H1 (cell line): ENCODE measurements at regions of chr7 and their contacts with region 1.

Region 1: DNA sequence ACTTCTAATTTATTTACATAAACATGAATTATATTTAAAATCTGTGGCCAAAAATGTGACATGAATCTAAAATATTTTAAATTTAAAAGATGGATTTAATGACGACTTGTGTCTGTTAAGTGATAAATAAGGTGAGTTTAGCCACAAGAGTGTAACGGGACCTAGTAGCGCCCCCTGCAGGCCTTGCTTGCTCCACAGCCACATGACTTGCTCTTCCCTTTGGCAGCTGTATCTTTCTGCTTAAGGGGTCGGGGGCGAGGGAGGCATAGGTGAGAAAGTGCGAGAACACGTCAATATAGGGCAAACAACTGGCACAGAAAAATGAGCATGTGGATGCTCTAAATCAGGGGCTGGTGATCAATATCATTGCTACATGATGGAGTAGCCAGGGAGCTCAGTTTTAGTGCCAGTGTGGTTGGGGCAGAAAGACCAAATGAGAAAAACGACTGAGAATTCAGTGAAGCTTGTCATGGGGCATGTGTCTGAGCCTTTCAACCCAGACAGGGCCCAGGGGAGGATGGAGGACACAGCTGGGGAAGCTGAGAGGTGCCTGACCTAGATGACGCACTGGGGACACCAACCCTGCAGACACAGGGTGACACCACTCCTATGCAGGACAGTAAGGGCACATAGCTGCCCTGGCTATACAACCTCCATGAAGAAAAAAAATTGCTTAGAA is 49.8 kb downstream of the PAXIP1 start:
- DNase-seq: peak; percentile 71 to 90
- H3K4me3 ChIP-seq: no peak overlapping the region
- H3K27ac ChIP-seq: no peak overlapping the region; the same call in 1 of the 2 replicates
- H3K4me1 ChIP-seq: no peaks in the 10 kb centered on the region
- H3K27me3 ChIP-seq: no peaks in the 10 kb centered on the region
- CTCF ChIP-seq: peak; percentile 81 to 89 (median 83)
- EP300 ChIP-seq: no peak
- POLR2A ChIP-seq: no peak
- RAD21 ChIP-seq: peak; percentile 55 to 65

Region 2: GRCh38 chr7:154794110-154794780 is 158.9 kb before region 1 on chr7:
- CTCF ChIA-PET with region 1: no interaction called
- POLR2A ChIA-PET with region 1: no interaction called
- DNase-seq: peak in 1 of 2 experiments; percentile 90
- H3K4me3 ChIP-seq: peak overlapping the region; percentile 11 to 57 (median 32); a peak in 7 of 8 replicates
- H3K27ac ChIP-seq: no peak overlapping the region
- H3K4me1 ChIP-seq: peaks cover 0 to 2% (median 0%) of the 10 kb centered on the region in 4 experiments; a peak in 3 of 7 replicates
- H3K27me3 ChIP-seq: no peaks in the 10 kb centered on the region; a peak in 1 of 7 replicates
- CTCF ChIP-seq: peak; percentile 83 to 91 (median 90)
- EP300 ChIP-seq: no peak
- POLR2A ChIP-seq: no peak; a peak in 1 of 3 replicates
- RAD21 ChIP-seq: peak; percentile 62 to 73

Region 3: DNA sequence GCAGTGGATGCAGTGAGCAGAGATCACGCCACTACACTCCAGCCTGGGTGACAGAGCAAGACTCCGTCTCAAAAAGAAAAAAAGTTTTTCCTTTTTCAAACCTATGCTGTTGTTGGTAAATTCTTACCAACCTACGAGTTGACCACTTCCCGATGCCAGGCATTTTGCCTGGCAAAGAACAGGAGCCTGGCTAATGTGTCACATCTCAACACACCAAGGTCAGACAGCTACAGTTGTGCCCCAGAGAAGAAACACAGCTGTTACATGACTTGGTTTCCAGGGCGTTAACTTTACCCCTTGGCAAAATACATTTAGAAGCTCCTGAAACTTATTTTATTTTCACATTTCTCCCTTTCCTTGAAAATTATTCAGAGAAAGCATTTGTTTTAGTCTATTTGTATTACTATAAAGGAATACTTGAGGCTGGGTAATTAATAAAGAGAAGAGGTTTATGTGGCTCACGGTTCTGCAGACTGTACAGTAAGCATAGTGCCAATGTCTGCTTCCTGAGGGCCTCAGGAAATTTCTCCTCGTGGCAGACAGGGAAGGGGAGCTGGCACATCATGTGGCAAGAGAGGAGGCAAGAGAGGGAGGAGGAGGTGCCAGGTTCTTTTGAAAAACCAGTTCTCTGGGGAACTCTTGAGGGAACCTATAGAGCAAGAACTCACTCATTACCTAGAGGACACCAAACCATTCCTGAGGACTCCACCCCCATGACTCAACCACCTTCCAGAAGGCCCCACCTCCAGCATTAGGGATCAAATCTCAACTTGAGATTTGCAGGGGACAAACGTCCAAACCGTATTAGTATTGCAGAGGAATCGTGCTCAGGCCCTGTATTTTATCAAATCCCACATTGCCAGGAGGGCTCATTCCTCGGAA is 33.6 kb before region 1 on chr7:
- CTCF ChIA-PET with region 1: interaction called, 38 read pairs
- POLR2A ChIA-PET with region 1: no interaction called
- DNase-seq: no peak
- H3K4me3 ChIP-seq: no peak overlapping the region
- H3K27ac ChIP-seq: no peak overlapping the region
- H3K4me1 ChIP-seq: no peaks in the 10 kb centered on the region; a peak in 1 of 7 replicates
- H3K27me3 ChIP-seq: peaks cover 0 to 3% (median 1%) of the 10 kb centered on the region in 4 experiments; a peak in 3 of 7 replicates
- CTCF ChIP-seq: no peak
- EP300 ChIP-seq: no peak
- POLR2A ChIP-seq: no peak
- RAD21 ChIP-seq: no peak

Region 4: GRCh38 chr7:154937837-154938236 is 15.3 kb before region 1 on chr7:
- CTCF ChIA-PET with region 1: interaction called, 34 read pairs
- POLR2A ChIA-PET with region 1: interaction called, 5 read pairs
- DNase-seq: no peak
- H3K4me3 ChIP-seq: no peak overlapping the region
- H3K27ac ChIP-seq: no peak overlapping the region
- H3K4me1 ChIP-seq: no peaks in the 10 kb centered on the region
- H3K27me3 ChIP-seq: no peaks in the 10 kb centered on the region
- CTCF ChIP-seq: no peak
- EP300 ChIP-seq: no peak
- POLR2A ChIP-seq: no peak
- RAD21 ChIP-seq: no peak

Region 5: DNA sequence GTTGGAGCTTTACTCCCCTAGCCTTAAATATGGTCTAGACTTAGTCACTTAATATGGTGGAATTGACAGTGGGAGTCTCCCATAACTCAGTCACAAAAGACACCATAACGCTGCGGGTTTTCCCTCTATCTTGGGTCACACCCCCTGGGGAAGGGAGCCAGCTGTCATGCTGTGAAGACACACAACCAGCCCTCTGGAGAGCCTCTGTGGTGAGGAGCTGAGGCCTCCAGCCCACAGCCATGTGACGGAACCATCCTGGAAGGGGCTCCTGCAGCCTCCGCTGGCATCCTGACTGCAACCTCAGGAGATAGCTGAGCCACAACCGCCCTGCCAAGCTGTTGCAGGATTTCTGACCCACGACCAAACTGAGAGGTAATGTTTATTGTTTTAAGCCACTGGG is 11.9 kb after region 1 on chr7:
- CTCF ChIA-PET with region 1: interaction called, 20 read pairs
- POLR2A ChIA-PET with region 1: no interaction called
- DNase-seq: no peak
- H3K4me3 ChIP-seq: no peak overlapping the region
- H3K27ac ChIP-seq: no peak overlapping the region
- H3K4me1 ChIP-seq: no peaks in the 10 kb centered on the region
- H3K27me3 ChIP-seq: no peaks in the 10 kb centered on the region
- CTCF ChIP-seq: no peak
- EP300 ChIP-seq: no peak
- POLR2A ChIP-seq: no peak
- RAD21 ChIP-seq: no peak

Region 6: GRCh38 chr7:154978017-154978416 is 24.9 kb after region 1 on chr7:
- CTCF ChIA-PET with region 1: interaction called, 16 read pairs
- POLR2A ChIA-PET with region 1: no interaction called
- DNase-seq: no peak
- H3K4me3 ChIP-seq: no peak overlapping the region
- H3K27ac ChIP-seq: no peak overlapping the region
- H3K4me1 ChIP-seq: no peaks in the 10 kb centered on the region
- H3K27me3 ChIP-seq: no peaks in the 10 kb centered on the region
- CTCF ChIP-seq: no peak
- EP300 ChIP-seq: no peak
- POLR2A ChIP-seq: no peak
- RAD21 ChIP-seq: no peak

Region 7: GRCh38 chr7:154984601-154985188 is 31.6 kb after region 1 on chr7:
- CTCF ChIA-PET with region 1: interaction called, 16 read pairs
- POLR2A ChIA-PET with region 1: no interaction called
- DNase-seq: no peak
- H3K4me3 ChIP-seq: no peak overlapping the region
- H3K27ac ChIP-seq: no peak overlapping the region
- H3K4me1 ChIP-seq: no peaks in the 10 kb centered on the region
- H3K27me3 ChIP-seq: no peaks in the 10 kb centered on the region
- CTCF ChIP-seq: no peak
- EP300 ChIP-seq: no peak
- POLR2A ChIP-seq: no peak
- RAD21 ChIP-seq: no peak

Region 8: DNA sequence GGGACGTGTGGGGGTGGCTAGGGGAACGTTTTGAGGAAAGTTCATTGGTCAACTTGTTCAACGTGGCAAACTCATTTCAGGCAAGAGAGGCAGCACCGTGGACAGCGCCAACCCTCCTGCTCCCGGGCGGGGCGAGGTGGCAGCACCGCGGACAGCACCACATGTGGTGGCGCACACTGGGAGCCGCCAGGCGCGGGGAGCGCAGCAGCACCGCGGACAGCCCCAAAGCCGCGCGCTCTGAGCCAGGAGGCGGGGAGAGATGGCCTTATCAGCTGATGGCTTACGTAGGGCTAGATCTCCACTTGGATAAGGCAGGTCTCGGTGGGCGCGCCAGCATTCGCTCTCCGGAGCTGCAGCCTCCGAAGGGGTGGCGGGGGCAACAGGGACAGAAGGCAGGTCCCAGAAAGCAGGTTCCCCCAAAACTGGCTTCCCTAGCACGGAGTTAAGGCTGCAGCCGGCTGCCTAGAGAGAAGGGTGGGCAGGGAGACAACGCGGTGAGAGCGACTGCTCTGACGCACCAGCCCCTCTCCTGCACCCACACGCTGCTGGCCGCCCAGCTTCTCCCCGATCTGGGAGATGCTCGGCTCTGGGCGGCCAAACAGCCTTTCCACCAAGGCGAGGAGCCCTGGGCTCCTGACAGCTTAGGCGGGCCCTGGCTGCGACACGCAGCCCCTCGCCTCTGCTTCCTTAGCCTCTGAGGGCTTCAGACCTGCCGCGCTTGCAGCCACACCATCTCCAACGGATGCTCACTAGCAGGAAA is 117.0 kb after region 1 on chr7 and contains the start of gene HTR5A:
- CTCF ChIA-PET with region 1: no interaction called
- POLR2A ChIA-PET with region 1: no interaction called
- DNase-seq: peak; percentile 78 to 97
- H3K4me3 ChIP-seq: peak within 1 kb of the TSS; percentile 19 to 59 (median 50); a peak in 7 of 8 replicates
- H3K27ac ChIP-seq: no peak within 1 kb of the TSS
- H3K4me1 ChIP-seq: peaks cover 0 to 7% (median 4%) of the 10 kb centered on the region in 4 experiments; a peak in 4 of 7 replicates
- H3K27me3 ChIP-seq: peaks cover 5 to 21% (median 16%) of the 10 kb centered on the region in 4 experiments; a peak in 6 of 7 replicates
- CTCF ChIP-seq: peak in 1 of 3 experiments; percentile 16; a peak in 1 of 4 replicates
- EP300 ChIP-seq: peak; percentile 43 to 85; a peak in 2 of 3 replicates
- POLR2A ChIP-seq: no peak
- RAD21 ChIP-seq: peak in 1 of 2 experiments; percentile 40; a peak in 2 of 4 replicates
- total RNA-seq, gene HTR5A: not detected in 2 replicates